ENCODE measurements at regions of chr17 and their contacts with region 1.

Region 1: DNA sequence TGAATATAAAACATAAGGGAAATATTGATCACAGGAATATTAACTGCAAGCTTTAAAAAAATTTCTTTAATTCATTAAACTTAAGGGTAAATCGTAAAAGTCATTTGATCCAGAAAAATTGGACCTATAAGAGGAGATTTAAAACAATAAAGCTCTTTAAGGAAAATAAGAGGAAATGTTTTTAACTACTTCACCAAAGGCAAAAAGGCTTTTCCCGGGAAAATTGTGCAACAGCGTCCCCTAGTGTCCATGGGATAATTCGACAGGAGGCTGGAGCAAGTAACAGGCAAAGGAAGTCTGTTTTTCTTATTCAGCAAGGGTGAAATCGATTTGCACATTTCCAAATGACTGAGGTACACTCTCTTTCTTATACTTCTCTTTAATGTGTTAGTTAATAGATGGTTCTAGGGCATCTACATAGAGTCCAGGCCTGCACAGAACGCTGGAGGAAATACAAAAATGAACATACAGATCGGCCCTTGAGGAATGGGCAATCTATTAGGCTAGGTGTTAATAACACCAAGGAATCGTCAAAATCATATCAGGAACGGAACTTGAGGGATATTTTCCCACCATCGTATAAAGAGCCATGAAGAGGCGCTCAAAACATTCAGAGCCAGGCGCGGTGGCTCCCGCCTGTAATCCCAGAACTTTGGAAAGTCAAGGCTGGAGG is 61.4 kb downstream of the ZNF18 start:
- H3K4me3 ChIP-seq: no peak overlapping the region
- H3K27ac ChIP-seq: no peak overlapping the region
- H3K4me1 ChIP-seq: no peaks in the 10 kb centered on the region
- CTCF ChIP-seq: peak; percentile 21; the same call in 1 of the 2 replicates

Region 2: GRCh38 chr17:11144358-11145233 is 791.3 kb before region 1 on chr17:
- CTCF ChIA-PET with region 1: interaction called, 14 read pairs
- POLR2A ChIA-PET with region 1: no interaction called
- H3K4me3 ChIP-seq: no peak overlapping the region
- H3K27ac ChIP-seq: no peak overlapping the region
- H3K4me1 ChIP-seq: no peaks in the 10 kb centered on the region
- CTCF ChIP-seq: peak; percentile 30; the same call in 1 of the 2 replicates

Region 3: GRCh38 chr17:11925262-11926021 is 10.4 kb before region 1 on chr17:
- CTCF ChIA-PET with region 1: interaction called, 31 read pairs
- POLR2A ChIA-PET with region 1: no interaction called
- H3K4me3 ChIP-seq: no peak overlapping the region
- H3K27ac ChIP-seq: no peak overlapping the region
- H3K4me1 ChIP-seq: no peaks in the 10 kb centered on the region
- CTCF ChIP-seq: no peak

Region 4: GRCh38 chr17:11950771-11951519 is 15.1 kb after region 1 on chr17:
- CTCF ChIA-PET with region 1: interaction called, 10 read pairs
- POLR2A ChIA-PET with region 1: no interaction called
- H3K4me3 ChIP-seq: no peak overlapping the region
- H3K27ac ChIP-seq: no peak overlapping the region
- H3K4me1 ChIP-seq: no peaks in the 10 kb centered on the region
- CTCF ChIP-seq: no peak

Region 5: GRCh38 chr17:11986942-11987329 is 51.1 kb after region 1 on chr17:
- CTCF ChIA-PET with region 1: interaction called, 13 read pairs
- POLR2A ChIA-PET with region 1: no interaction called
- H3K4me3 ChIP-seq: no peak overlapping the region
- H3K27ac ChIP-seq: no peak overlapping the region
- H3K4me1 ChIP-seq: no peaks in the 10 kb centered on the region
- CTCF ChIP-seq: no peak

Measured in HEK293 (cell line).